A673 (cell line): ENCODE measurements at regions of chr16 and their contacts with region 1.

Region 1: GRCh38 chr16:28069971-28070794 is 6.7 kb upstream of the GSG1L start:
- DNase-seq: no peak
- H3K4me3 ChIP-seq: no peak overlapping the region
- H3K27ac ChIP-seq: no peak overlapping the region
- H3K4me1 ChIP-seq: no peaks in the 10 kb centered on the region
- H3K27me3 ChIP-seq: peaks cover 20% of the 10 kb centered on the region
- CTCF ChIP-seq: no peak

Region 2: GRCh38 chr16:27639561-27640276 is 430.5 kb before region 1 on chr16:
- CTCF ChIA-PET with region 1: interaction called, 9 read pairs
- POLR2A ChIA-PET with region 1: no interaction called
- intact Hi-C with region 1: loop called (anchors 5 kb)
- DNase-seq: peak; percentile 67
- H3K4me3 ChIP-seq: no peak overlapping the region
- H3K27ac ChIP-seq: no peak overlapping the region
- H3K4me1 ChIP-seq: no peaks in the 10 kb centered on the region
- H3K27me3 ChIP-seq: no peaks in the 10 kb centered on the region
- CTCF ChIP-seq: peak; percentile 84

Region 3: DNA sequence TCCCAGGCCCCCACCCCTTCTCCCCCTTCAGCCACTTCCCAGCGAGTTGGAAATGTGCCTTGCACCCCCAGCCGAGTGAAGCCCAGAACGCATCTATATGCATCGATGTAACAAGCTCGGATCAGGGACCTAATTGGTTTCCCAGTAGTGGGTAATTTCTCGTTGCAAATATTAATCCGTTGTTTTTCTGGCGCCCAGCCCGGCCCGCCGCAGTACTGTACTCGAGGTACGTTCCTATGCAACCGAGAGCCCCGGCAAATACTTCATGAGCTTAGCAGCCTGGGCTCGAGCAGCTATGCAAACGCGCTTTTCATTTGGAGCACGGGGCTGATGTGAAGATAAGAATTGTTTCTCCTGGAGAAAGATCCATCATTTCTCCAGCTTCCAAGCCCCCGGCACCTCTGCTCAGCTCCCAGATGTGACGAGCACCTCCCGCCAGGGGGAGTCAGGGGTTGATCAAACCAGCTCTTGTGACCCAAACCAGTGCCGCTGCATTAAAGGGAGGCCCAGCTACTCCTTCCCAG is 290.5 kb before region 1 on chr16:
- CTCF ChIA-PET with region 1: interaction called, 17 read pairs
- POLR2A ChIA-PET with region 1: no interaction called
- intact Hi-C with region 1: loop called (anchors 2 kb)
- DNase-seq: peak; percentile 70
- H3K4me3 ChIP-seq: no peak overlapping the region
- H3K27ac ChIP-seq: no peak overlapping the region
- H3K4me1 ChIP-seq: peaks cover 11% of the 10 kb centered on the region
- H3K27me3 ChIP-seq: no peaks in the 10 kb centered on the region
- CTCF ChIP-seq: peak; percentile 65

Region 4: GRCh38 chr16:27960619-27961295 is 109.4 kb before region 1 on chr16:
- CTCF ChIA-PET with region 1: no interaction called
- POLR2A ChIA-PET with region 1: no interaction called
- intact Hi-C with region 1: no loop called
- DNase-seq: no peak
- H3K4me3 ChIP-seq: no peak overlapping the region
- H3K27ac ChIP-seq: no peak overlapping the region
- H3K4me1 ChIP-seq: no peaks in the 10 kb centered on the region
- H3K27me3 ChIP-seq: no peaks in the 10 kb centered on the region
- CTCF ChIP-seq: no peak

Region 5: DNA sequence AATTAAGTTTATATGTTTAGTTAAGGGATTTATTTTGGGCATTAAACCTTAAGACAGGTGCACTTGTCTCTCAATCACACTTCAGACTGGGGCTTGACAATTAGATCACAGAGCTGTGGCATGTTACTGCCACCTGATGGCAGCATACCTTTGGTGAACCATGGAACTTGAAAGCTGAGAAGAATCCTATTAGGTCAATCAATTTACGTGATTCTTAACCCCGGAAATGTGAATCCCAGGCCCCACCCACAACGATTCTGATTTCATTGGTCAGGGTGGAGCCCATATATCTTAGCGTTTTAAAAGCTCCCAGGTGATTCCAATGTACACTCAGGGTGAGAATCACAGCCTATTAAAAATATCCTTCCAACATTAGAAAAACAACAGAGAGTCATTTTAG is 97.7 kb before region 1 on chr16:
- CTCF ChIA-PET with region 1: interaction called, 14 read pairs
- POLR2A ChIA-PET with region 1: no interaction called
- intact Hi-C with region 1: loop called (anchors 1 kb)
- DNase-seq: peak; percentile 57
- H3K4me3 ChIP-seq: no peak overlapping the region
- H3K27ac ChIP-seq: no peak overlapping the region
- H3K4me1 ChIP-seq: no peaks in the 10 kb centered on the region
- H3K27me3 ChIP-seq: no peaks in the 10 kb centered on the region
- CTCF ChIP-seq: peak; percentile 73

Region 6: DNA sequence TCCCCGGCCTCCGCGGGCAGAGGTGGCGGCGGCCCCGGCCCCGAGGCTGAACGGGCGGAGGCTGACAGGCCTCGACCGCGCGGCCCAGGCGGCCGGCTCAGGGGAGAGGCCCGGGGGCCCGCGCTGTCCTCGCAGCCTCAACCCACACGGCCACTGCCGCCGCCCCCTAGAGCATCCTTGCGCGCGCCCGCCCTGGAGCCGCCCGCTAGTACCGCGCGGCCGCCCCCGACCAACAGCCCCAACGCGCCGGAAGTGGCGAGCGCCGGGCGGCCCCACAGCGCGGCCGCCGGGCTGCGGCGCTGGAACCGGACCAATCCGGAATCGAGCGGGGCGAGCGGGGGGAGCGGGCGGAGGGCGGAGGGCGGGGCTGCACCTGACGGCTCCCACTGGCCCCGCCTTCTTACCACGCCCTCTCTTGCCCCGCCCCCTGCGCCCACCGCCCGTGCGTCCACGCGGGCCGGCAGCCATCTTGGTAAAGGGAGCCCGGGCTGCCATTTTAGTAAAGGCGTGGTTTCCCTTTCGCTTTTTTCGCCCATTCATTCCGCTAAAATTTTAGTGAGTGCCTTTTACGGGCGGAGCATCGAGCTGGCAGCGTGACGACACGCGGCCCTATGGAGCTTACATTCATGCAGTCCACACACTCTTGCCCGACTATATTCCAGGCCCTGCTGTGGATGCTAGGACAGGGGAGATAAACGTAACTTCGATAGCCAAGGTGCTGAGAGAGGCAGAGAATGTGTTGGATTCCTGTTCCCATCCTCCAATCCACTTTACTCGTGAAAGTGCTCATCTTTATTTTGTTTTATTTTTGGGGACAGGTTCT is 141.7 kb after region 1 on chr16 and contains the start of gene XPO6:
- CTCF ChIA-PET with region 1: no interaction called
- POLR2A ChIA-PET with region 1: no interaction called
- intact Hi-C with region 1: loop called (anchors 10 kb)
- DNase-seq: peak; percentile 94
- H3K4me3 ChIP-seq: peak within 1 kb of the TSS; percentile 68
- H3K27ac ChIP-seq: peak within 1 kb of the TSS; percentile 70
- H3K4me1 ChIP-seq: peaks cover 7% of the 10 kb centered on the region
- H3K27me3 ChIP-seq: no peaks in the 10 kb centered on the region
- CTCF ChIP-seq: no peak
- total RNA-seq, gene XPO6: 155 and 159 TPM in 2 replicates

Region 7: GRCh38 chr16:28218104-28218503 is 147.9 kb after region 1 on chr16:
- CTCF ChIA-PET with region 1: interaction called, 10 read pairs
- POLR2A ChIA-PET with region 1: no interaction called
- intact Hi-C with region 1: loop called (anchors 10 kb)
- DNase-seq: peak; percentile 80
- H3K4me3 ChIP-seq: no peak overlapping the region
- H3K27ac ChIP-seq: no peak overlapping the region
- H3K4me1 ChIP-seq: no peaks in the 10 kb centered on the region
- H3K27me3 ChIP-seq: no peaks in the 10 kb centered on the region
- CTCF ChIP-seq: peak; percentile 68